OCI-LY7 (cell line): ENCODE measurements at regions of chr6 and their contacts with region 1.

Region 1: DNA sequence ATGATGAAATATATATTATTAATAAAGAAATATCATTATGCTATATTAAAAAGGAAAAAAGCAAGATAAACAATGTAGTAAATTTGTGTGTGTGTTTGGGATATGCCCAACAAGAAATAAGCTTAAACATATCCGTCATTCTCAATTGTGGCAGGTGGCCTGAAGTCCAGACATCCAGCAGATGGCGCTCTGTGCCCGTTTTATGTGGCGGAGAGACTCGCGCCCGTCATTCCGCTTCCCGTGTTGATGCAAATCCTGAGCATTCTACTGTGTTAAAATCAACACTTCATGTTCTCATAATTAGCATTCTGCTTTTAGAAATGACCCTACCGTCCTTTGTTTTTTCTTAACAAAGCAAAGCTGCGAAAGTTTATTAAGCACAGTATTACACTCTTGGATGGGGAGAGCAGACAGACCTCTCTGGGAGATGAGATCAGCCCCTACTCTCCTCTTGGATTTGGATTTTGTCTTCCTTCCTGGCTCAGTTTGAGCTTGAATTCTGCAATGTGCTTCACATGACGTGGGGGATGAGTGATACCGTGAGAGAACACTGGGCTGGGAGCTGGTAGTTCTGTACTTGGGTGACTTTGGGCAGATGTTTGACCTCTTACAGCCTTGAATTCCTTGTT is 125.8 kb downstream of the MCHR2 start:
- DNase-seq: peak; percentile 58
- H3K4me3 ChIP-seq: no peak overlapping the region
- H3K27ac ChIP-seq: no peak overlapping the region
- H3K4me1 ChIP-seq: no peaks in the 10 kb centered on the region
- CTCF ChIP-seq: peak; percentile 97

Region 2: GRCh38 chr6:99530627-99531026 is 337.6 kb before region 1 on chr6:
- CTCF ChIA-PET with region 1: no interaction called
- POLR2A ChIA-PET with region 1: no interaction called
- intact Hi-C with region 1: no loop called
- DNase-seq: no peak
- H3K4me3 ChIP-seq: no peak overlapping the region
- H3K27ac ChIP-seq: no peak overlapping the region
- H3K4me1 ChIP-seq: no peaks in the 10 kb centered on the region
- CTCF ChIP-seq: no peak

Region 3: DNA sequence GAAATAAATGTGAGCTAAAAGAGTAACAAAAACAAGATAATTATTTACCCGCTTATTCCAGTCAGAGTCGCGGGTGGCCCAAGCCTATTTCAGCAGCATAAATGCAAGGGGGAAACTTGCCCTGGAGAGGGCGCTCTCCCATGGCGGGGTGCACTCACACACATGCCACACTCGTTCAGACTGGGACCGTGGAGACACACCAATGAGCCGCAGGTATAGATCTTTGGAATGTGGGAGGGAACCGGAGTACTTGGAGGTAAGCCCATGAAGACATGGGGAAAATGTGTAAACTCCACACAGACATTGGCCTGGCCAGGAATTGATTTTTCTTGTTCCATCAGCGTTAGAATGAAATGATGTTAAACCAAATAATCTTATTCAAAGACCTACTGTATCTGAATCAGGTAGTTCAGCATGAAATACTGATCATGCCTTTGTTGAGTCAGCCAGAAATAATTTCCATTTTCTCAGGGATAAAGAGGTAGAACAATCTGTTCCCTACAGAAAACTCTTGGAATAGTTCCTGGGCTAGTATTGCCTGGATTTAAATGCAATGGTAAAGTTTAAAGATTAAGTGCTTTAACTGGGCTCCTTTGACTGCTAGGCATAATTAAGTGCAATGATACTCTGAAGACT is 65.7 kb before region 1 on chr6:
- CTCF ChIA-PET with region 1: no interaction called
- POLR2A ChIA-PET with region 1: no interaction called
- intact Hi-C with region 1: no loop called
- DNase-seq: no peak
- H3K4me3 ChIP-seq: no peak overlapping the region
- H3K27ac ChIP-seq: no peak overlapping the region
- H3K4me1 ChIP-seq: no peaks in the 10 kb centered on the region
- CTCF ChIP-seq: peak; percentile 33; the same call in 1 of the 2 replicates

Region 4: DNA sequence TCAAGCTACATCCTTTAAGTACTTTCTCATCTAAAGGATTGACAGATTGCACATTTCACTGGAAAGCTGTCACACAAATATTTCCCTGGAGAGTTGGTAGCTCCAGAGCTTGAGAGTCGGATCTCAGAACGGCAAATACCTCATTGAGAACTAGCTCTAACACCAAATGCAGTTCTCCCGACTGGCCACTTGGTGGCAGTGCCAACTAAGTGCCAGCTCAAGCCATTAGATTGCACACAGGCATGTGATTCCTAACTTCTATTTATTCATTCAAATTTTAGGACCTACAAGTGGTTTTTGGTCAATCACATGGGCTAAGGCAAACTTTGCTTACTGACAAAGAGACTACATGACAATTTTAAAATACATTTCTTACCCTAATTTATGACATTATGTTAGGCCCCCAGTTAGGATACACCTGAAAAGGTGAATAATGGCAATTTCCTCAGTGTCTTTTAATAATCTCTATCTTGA is 133.8 kb after region 1 on chr6:
- CTCF ChIA-PET with region 1: no interaction called
- POLR2A ChIA-PET with region 1: no interaction called
- intact Hi-C with region 1: loop called (anchors 5 kb)
- DNase-seq: peak; percentile 58
- H3K4me3 ChIP-seq: no peak overlapping the region
- H3K27ac ChIP-seq: no peak overlapping the region
- H3K4me1 ChIP-seq: no peaks in the 10 kb centered on the region
- CTCF ChIP-seq: peak; percentile 93